ENCODE measurements at regions of chr3 and their contacts with region 1.

Region 1: DNA sequence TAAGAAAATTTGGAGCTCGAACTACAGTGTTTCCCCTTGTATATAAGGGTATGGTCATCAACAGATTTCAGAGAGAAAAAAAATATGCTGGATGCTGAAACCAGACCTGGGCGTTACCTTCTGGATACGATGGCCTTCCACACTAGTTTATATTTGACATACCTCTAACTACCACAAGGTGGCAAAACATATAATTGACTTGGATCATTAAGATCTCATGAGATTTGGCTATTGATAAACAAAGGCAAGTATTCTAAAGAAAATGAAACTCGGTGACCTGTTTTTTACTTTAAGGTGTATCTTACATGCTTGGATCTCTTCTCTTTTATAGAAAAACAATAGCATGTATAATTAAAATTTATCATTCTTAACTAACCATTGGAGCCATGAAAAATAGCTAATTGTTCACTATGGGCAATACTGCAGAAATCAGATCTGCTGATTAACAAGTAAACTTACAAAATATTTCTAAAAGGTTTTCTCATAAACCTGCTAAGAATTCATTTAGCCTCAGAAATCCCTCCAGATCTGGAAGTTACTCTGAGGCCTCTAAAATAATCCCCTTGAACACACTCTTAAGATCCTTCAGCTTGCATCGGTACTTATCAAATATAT is 300.6 kb upstream of the KCNH8 start:
- DNase-seq: peak; percentile 14
- CTCF ChIP-seq: peak; percentile 34

Region 2: GRCh38 chr3:18717598-18717997 is 130.1 kb before region 1 on chr3:
- CTCF ChIA-PET with region 1: no interaction called
- POLR2A ChIA-PET with region 1: no interaction called
- DNase-seq: no peak
- CTCF ChIP-seq: no peak

Region 3: DNA sequence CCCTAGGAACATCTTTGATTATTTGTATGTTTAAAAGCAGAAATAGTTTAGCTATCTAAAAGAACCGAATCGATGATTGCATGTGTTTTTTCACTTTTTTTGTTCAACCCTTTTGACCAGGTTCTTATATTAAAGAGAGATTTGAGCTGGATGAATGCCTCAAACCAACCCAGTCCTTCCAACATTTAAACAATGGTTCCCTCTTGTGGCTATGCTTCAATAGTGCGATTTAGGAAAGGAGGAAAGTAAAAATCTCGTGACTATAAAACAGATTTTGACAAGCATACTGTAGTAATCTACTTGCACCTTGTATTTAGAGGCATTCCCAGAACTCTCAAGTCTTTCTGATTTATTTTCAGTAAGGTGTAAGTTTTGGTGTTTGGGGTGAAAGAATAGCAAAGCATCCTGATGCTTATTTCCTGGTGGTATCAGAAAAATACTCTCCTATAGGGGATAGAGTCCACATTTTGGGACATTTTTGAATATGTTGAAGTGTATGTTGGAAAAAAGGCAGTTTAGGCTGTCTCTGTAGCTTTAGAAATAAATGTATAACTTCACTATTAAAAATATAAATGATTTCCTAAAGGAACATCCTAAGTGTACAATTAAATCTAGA is 141.0 kb after region 1 on chr3:
- CTCF ChIA-PET with region 1: interaction called, 11 read pairs
- POLR2A ChIA-PET with region 1: no interaction called
- DNase-seq: no peak
- CTCF ChIP-seq: peak; percentile 23

Measured in GM10248 (cell line).